ENCODE measurements at regions of chr12 and their contacts with region 1.

Region 1: GRCh38 chr12:121626087-121626852 is at the start of gene ORAI1:
- DNase-seq: peak; percentile 98
- ATAC-seq: peak; percentile 50
- H3K4me3 Mint-ChIP-seq: peak within 1 kb of the TSS; percentile 92
- H3K27ac Mint-ChIP-seq: peak within 1 kb of the TSS; percentile 99
- H3K4me1 Mint-ChIP-seq: peaks cover 36% of the 10 kb centered on the region
- H3K27me3 Mint-ChIP-seq: no peaks in the 10 kb centered on the region
- total RNA-seq, gene ORAI1: 29.4 to 35.9 TPM

Region 2: DNA sequence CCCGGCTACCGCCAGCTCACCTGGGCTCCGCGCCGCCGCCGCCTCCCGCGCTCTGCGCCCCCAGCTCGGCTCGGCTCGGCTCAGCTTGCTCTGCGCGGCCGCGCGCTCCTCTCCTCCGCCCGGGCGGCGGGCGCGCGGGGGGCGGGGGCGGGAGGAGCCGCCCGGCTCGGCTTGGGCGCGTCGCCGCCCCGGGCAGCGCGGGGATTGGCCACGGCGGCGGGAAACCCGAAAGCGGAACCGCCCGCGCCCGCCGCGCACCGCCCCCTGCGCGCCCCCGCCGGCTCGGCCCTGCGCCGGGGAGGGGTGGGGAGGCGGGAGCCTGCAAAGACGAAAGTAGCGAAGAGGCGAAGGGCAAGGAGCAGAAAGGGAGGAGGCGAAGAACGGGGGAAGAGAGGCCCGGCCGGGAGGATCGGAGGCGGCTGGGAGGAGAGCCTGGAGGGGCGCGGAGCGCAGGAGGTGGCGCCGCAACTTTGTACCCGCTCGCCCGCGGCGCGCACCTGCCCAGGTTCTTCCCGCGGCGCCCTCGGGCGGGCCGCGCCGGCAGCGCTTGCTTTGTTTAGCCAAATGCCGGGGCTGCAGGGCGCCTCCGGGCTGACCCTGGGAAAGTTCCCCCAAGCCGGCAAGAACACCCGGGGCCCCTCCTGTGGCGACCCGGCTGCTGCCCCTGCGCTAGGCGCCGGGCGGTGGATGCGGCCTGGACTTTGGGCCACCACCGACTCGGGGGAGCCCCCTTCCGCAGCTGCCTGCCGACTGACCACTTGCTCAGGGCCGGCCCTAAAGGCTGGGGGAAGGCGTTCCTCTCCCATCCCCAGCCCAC is 329.4 kb before region 1 on chr12 and contains the start of gene CAMKK2:
- CTCF ChIA-PET with region 1: no interaction called
- POLR2A ChIA-PET with region 1: no interaction called
- intact Hi-C with region 1: loop called (anchors 1 to 2 kb)
- DNase-seq: peak; percentile 92
- ATAC-seq: peak; percentile 86
- H3K4me3 Mint-ChIP-seq: peak within 1 kb of the TSS; percentile 88
- H3K27ac Mint-ChIP-seq: peak within 1 kb of the TSS; percentile 80
- H3K4me1 Mint-ChIP-seq: peaks cover 20% of the 10 kb centered on the region
- H3K27me3 Mint-ChIP-seq: no peaks in the 10 kb centered on the region
- total RNA-seq, gene CAMKK2: 24.2 to 30.3 TPM

Region 3: GRCh38 chr12:121499929-121500793 is 126.1 kb before region 1 on chr12:
- CTCF ChIA-PET with region 1: interaction called, 5 read pairs
- POLR2A ChIA-PET with region 1: interaction called, 3 read pairs
- intact Hi-C with region 1: loop called (anchors 1 to 5 kb)
- DNase-seq: peak; percentile 84
- ATAC-seq: peak; percentile 86
- H3K4me3 Mint-ChIP-seq: no peak overlapping the region
- H3K27ac Mint-ChIP-seq: no peak overlapping the region
- H3K4me1 Mint-ChIP-seq: peaks cover 13% of the 10 kb centered on the region
- H3K27me3 Mint-ChIP-seq: no peaks in the 10 kb centered on the region

Region 4: GRCh38 chr12:121579981-121580868 is 46.0 kb before region 1 on chr12:
- CTCF ChIA-PET with region 1: interaction called, 8 read pairs
- POLR2A ChIA-PET with region 1: interaction called, 12 read pairs
- intact Hi-C with region 1: loop called (anchors 1 to 2 kb)
- DNase-seq: peak; percentile 87
- ATAC-seq: peak; percentile 76
- H3K4me3 Mint-ChIP-seq: peak overlapping the region; percentile 83
- H3K27ac Mint-ChIP-seq: peak overlapping the region; percentile 99
- H3K4me1 Mint-ChIP-seq: peaks cover 24% of the 10 kb centered on the region
- H3K27me3 Mint-ChIP-seq: no peaks in the 10 kb centered on the region

Region 5: GRCh38 chr12:121668750-121669520 is 42.7 kb after region 1 on chr12:
- CTCF ChIA-PET with region 1: interaction called, 29 read pairs
- POLR2A ChIA-PET with region 1: interaction called, 12 read pairs
- intact Hi-C with region 1: loop called (anchors 1 kb)
- DNase-seq: peak; percentile 80
- ATAC-seq: no peak
- H3K4me3 Mint-ChIP-seq: no peak overlapping the region
- H3K27ac Mint-ChIP-seq: no peak overlapping the region
- H3K4me1 Mint-ChIP-seq: peaks cover 57% of the 10 kb centered on the region
- H3K27me3 Mint-ChIP-seq: no peaks in the 10 kb centered on the region

Region 6: DNA sequence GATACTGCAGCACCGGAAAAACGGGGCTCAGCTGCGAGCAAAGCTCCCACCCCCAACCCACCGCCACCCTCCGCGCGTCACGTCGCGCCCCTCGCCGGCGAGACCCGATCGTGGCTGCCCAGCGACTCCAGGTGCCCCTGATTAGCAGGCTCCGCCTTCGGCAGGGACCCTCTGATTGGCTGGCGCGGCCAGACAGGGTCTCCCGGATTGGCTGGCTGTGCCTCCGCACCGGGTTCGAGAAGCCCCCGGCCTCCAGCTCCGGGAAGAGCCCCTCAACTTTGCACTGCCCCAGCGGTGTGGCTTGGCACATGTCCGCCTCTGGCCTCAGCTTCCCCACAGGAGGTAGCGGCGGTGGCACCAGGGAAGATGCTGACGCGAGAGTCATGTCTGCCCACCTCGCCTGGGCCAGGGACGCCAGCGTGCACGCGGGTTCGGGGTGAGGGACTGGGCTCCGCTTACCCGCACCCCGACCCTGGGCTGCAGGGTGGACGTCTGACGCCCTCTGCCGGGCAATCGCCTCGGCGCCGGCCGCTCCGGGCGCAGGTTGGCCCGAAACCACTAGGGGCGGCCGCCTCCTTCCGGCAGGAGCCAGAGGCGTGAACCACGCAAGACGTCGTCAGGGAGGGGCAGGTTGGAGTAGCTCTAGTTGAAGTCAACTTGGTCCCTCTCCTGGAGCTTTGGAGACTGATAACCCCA is 167.7 kb after region 1 on chr12:
- CTCF ChIA-PET with region 1: interaction called, 6 read pairs
- POLR2A ChIA-PET with region 1: interaction called, 4 read pairs
- intact Hi-C with region 1: loop called (anchors 1 to 5 kb)
- DNase-seq: peak; percentile 98
- ATAC-seq: peak; percentile 63
- H3K4me3 Mint-ChIP-seq: peak overlapping the region; percentile 96
- H3K27ac Mint-ChIP-seq: peak overlapping the region; percentile 92
- H3K4me1 Mint-ChIP-seq: peaks cover 56% of the 10 kb centered on the region
- H3K27me3 Mint-ChIP-seq: no peaks in the 10 kb centered on the region

Region 7: GRCh38 chr12:121925358-121925695 is 299.1 kb after region 1 on chr12:
- CTCF ChIA-PET with region 1: no interaction called
- POLR2A ChIA-PET with region 1: no interaction called
- intact Hi-C with region 1: no loop called
- DNase-seq: no peak
- ATAC-seq: no peak
- H3K4me3 Mint-ChIP-seq: no peak overlapping the region
- H3K27ac Mint-ChIP-seq: no peak overlapping the region
- H3K4me1 Mint-ChIP-seq: no peaks in the 10 kb centered on the region
- H3K27me3 Mint-ChIP-seq: no peaks in the 10 kb centered on the region